ENCODE measurements at regions of chrX and their contacts with region 1.

Region 1: GRCh38 chrX:80876877-80877276 is 67.2 kb upstream of the BRWD3 start:
- DNase-seq: peak; percentile 10
- ATAC-seq: no peak
- H3K4me3 ChIP-seq: no peak overlapping the region
- H3K27ac ChIP-seq: no peak overlapping the region
- H3K4me1 ChIP-seq: no peaks in the 10 kb centered on the region
- H3K27me3 ChIP-seq: no peaks in the 10 kb centered on the region
- CTCF ChIP-seq: peak; percentile 31; the same call in 1 of the 2 replicates

Region 2: GRCh38 chrX:81114757-81115156 is 237.9 kb after region 1 on chrX:
- CTCF ChIA-PET with region 1: no interaction called
- POLR2A ChIA-PET with region 1: no interaction called
- in situ Hi-C with region 1: no loop called
- intact Hi-C with region 1: loop called (anchors 5 kb)
- DNase-seq: no peak
- ATAC-seq: no peak
- H3K4me3 ChIP-seq: no peak overlapping the region
- H3K27ac ChIP-seq: no peak overlapping the region
- H3K4me1 ChIP-seq: no peaks in the 10 kb centered on the region
- H3K27me3 ChIP-seq: no peaks in the 10 kb centered on the region
- CTCF ChIP-seq: no peak

Region 3: GRCh38 chrX:81195712-81196111 is 318.8 kb after region 1 on chrX:
- CTCF ChIA-PET with region 1: no interaction called
- POLR2A ChIA-PET with region 1: no interaction called
- in situ Hi-C with region 1: no loop called
- intact Hi-C with region 1: loop called (anchors 10 kb)
- DNase-seq: no peak
- ATAC-seq: peak; percentile 74; the same call in 1 of the 2 replicates
- H3K4me3 ChIP-seq: no peak overlapping the region
- H3K27ac ChIP-seq: no peak overlapping the region
- H3K4me1 ChIP-seq: no peaks in the 10 kb centered on the region
- H3K27me3 ChIP-seq: no peaks in the 10 kb centered on the region
- CTCF ChIP-seq: peak; percentile 75

Region 4: GRCh38 chrX:81377329-81377728 is 500.5 kb after region 1 on chrX:
- CTCF ChIA-PET with region 1: interaction called, 3 read pairs
- POLR2A ChIA-PET with region 1: no interaction called
- in situ Hi-C with region 1: no loop called
- intact Hi-C with region 1: loop called (anchors 10 kb)
- DNase-seq: peak; percentile 2
- ATAC-seq: no peak
- H3K4me3 ChIP-seq: no peak overlapping the region
- H3K27ac ChIP-seq: no peak overlapping the region
- H3K4me1 ChIP-seq: no peaks in the 10 kb centered on the region
- H3K27me3 ChIP-seq: no peaks in the 10 kb centered on the region
- CTCF ChIP-seq: peak; percentile 61; the same call in 1 of the 2 replicates